ENCODE measurements at regions of chr19 and their contacts with region 1.

Region 1: GRCh38 chr19:34096020-34096915 is 76.0 kb upstream of the LSM14A start:
- DNase-seq: peak; percentile 59
- H3K4me3 ChIP-seq: no peak overlapping the region
- H3K27ac ChIP-seq: no peak overlapping the region
- H3K4me1 ChIP-seq: no peaks in the 10 kb centered on the region
- H3K27me3 ChIP-seq: peaks cover 0 to 4% of the 10 kb centered on the region in 2 experiments
- CTCF ChIP-seq: peak; percentile 33 to 47
- POLR2A ChIP-seq: no peak

Region 2: GRCh38 chr19:33795370-33796163 is 300.7 kb before region 1 on chr19:
- CTCF ChIA-PET with region 1: interaction called, 30 read pairs
- POLR2A ChIA-PET with region 1: no interaction called
- dilution Hi-C with region 1: no loop called
- intact Hi-C with region 1: no loop called
- DNase-seq: peak; percentile 88
- H3K4me3 ChIP-seq: peak overlapping the region; percentile 64 to 86 (median 71)
- H3K27ac ChIP-seq: peak overlapping the region; percentile 83
- H3K4me1 ChIP-seq: peaks cover 17% of the 10 kb centered on the region
- H3K27me3 ChIP-seq: no peaks in the 10 kb centered on the region
- CTCF ChIP-seq: peak; percentile 74 to 85
- POLR2A ChIP-seq: peak; percentile 81

Region 3: GRCh38 chr19:34041925-34042521 is 54.2 kb before region 1 on chr19:
- CTCF ChIA-PET with region 1: interaction called, 71 read pairs
- POLR2A ChIA-PET with region 1: no interaction called
- dilution Hi-C with region 1: no loop called
- intact Hi-C with region 1: loop called (anchors 1 kb)
- DNase-seq: peak; percentile 41
- H3K4me3 ChIP-seq: no peak overlapping the region
- H3K27ac ChIP-seq: no peak overlapping the region
- H3K4me1 ChIP-seq: no peaks in the 10 kb centered on the region
- H3K27me3 ChIP-seq: no peaks in the 10 kb centered on the region
- CTCF ChIP-seq: peak; percentile 96
- POLR2A ChIP-seq: no peak

Region 4: GRCh38 chr19:34082289-34083077 is 13.8 kb before region 1 on chr19:
- CTCF ChIA-PET with region 1: interaction called, 27 read pairs
- POLR2A ChIA-PET with region 1: no interaction called
- dilution Hi-C with region 1: no loop called
- intact Hi-C with region 1: no loop called
- DNase-seq: no peak
- H3K4me3 ChIP-seq: no peak overlapping the region
- H3K27ac ChIP-seq: no peak overlapping the region
- H3K4me1 ChIP-seq: no peaks in the 10 kb centered on the region
- H3K27me3 ChIP-seq: peaks cover 3 to 4% of the 10 kb centered on the region in 2 experiments
- CTCF ChIP-seq: no peak
- POLR2A ChIP-seq: no peak

Region 5: DNA sequence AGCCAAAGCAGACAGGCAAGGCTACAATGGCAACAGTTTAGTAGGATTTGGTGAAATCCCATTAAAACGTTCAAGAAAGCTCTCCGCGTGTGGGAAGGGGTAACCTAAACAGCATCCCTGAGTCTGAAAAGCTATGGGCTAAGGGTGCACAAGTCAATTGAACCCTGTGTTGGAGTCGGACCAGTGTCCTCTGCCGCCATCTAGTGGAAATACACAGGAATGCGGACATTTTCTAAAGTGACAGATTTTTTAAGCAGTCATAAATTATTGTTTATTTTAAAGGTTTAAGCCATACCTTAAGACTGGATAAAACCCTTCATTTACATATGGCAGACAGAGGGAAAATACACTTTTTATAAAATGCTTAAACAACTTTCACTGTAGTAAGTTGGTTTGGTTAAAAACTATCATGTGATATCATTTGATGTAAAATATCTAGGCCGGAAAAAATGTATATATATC is 49.5 kb after region 1 on chr19:
- CTCF ChIA-PET with region 1: interaction called, 21 read pairs
- POLR2A ChIA-PET with region 1: no interaction called
- dilution Hi-C with region 1: no loop called
- intact Hi-C with region 1: loop called (anchors 1 kb)
- DNase-seq: peak; percentile 65
- H3K4me3 ChIP-seq: no peak overlapping the region
- H3K27ac ChIP-seq: no peak overlapping the region
- H3K4me1 ChIP-seq: no peaks in the 10 kb centered on the region
- H3K27me3 ChIP-seq: no peaks in the 10 kb centered on the region
- CTCF ChIP-seq: peak; percentile 68 to 71
- POLR2A ChIP-seq: no peak

Measured in endothelial cell of umbilical vein (primary cell).